CD4-positive, alpha-beta memory T cell (primary cell): ENCODE measurements at regions of chr17 and their contacts with region 1.

Region 1: DNA sequence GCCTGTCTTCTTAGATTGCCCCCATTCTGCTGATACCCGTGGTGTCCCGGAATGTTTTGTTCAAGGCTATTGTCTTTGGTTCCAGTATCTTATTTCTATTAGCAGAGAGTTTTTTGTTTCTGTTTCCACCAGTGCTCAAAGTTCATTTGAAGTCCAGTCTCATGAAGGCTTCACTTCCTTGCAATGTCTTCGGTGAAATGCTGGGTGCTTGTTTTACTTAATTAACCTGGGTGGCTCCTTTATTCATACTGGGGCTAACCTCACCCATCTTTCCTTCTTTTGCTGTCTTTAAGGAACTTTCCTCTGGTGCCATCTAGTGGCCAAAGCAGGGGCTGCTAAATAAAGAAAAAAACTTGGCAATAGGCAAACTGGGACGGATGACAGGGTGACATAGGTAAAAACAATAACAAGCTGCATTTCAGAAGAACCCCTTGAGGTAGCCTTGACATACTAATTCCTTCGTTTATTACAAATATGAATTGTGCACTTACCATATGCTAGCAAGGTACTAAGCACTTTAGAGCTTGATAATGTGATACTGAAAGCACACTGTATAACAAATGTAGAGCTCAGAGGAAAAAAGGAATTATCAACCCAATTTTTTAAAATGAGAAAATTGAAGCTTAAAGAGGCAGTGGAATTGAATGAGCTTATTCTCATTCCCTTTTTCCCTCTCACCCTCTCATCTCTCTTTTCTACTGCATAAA is 2.8 kb upstream of the SMIM36 start:
- DNase-seq: peak; percentile 54 to 66 (median 58)
- H3K4me3 ChIP-seq: no peak overlapping the region
- H3K4me3 Mint-ChIP-seq: no peak overlapping the region
- H3K27ac ChIP-seq: no peak overlapping the region
- H3K27ac Mint-ChIP-seq: no peak overlapping the region
- H3K4me1 ChIP-seq: no peaks in the 10 kb centered on the region
- H3K4me1 Mint-ChIP-seq: peaks cover 0 to 3% (median 0%) of the 10 kb centered on the region in 4 donors
- H3K27me3 ChIP-seq: peaks cover 6% of the 10 kb centered on the region
- H3K27me3 Mint-ChIP-seq: peaks cover 2 to 4% of the 10 kb centered on the region in 2 donors

Region 2: GRCh38 chr17:55356434-55357328 is 157.4 kb before region 1 on chr17:
- CTCF ChIA-PET with region 1: interaction called, 21 read pairs
- POLR2A ChIA-PET with region 1: no interaction called
- intact Hi-C with region 1: loop called (anchors 1 kb)
- DNase-seq: peak; percentile 56 to 73 (median 61)
- H3K4me3 ChIP-seq: no peak overlapping the region
- H3K4me3 Mint-ChIP-seq: no peak overlapping the region
- H3K27ac ChIP-seq: no peak overlapping the region
- H3K27ac Mint-ChIP-seq: no peak overlapping the region
- H3K4me1 ChIP-seq: no peaks in the 10 kb centered on the region
- H3K4me1 Mint-ChIP-seq: peaks cover 0 to 4% (median 3%) of the 10 kb centered on the region in 4 donors
- H3K27me3 ChIP-seq: no peaks in the 10 kb centered on the region
- H3K27me3 Mint-ChIP-seq: peaks cover 0 to 7% of the 10 kb centered on the region in 2 donors